T-cell (primary cell): ENCODE measurements at regions of chr5 and their contacts with region 1.

Region 1: GRCh38 chr5:157155297-157155696 is 10.8 kb downstream of the GARIN3 start:
- DNase-seq: no peak
- ATAC-seq: no peak
- H3K4me3 ChIP-seq: peak overlapping the region in 1 of 2 donors; percentile 4
- H3K4me3 Mint-ChIP-seq: peak overlapping the region; percentile 72 to 85 (median 81)
- H3K27ac ChIP-seq: peak overlapping the region; percentile 76
- H3K27ac Mint-ChIP-seq: peak overlapping the region; percentile 98 to 99
- H3K4me1 ChIP-seq: peaks cover 21 to 40% of the 10 kb centered on the region in 2 experiments
- H3K4me1 Mint-ChIP-seq: peaks cover 71 to 83% (median 77%) of the 10 kb centered on the region in 3 donors
- H3K27me3 ChIP-seq: no peaks in the 10 kb centered on the region
- H3K27me3 Mint-ChIP-seq: no peaks in the 10 kb centered on the region

Region 2: GRCh38 chr5:157142317-157143126 is 12.8 kb before region 1 on chr5 and contains the start of gene MED7:
- CTCF ChIA-PET with region 1: interaction called in 1 of 2 experiments, 13 read pairs
- POLR2A ChIA-PET with region 1: interaction called, 3 to 11 read pairs
- DNase-seq: peak; percentile 68 to 99 (median 93)
- ATAC-seq: peak; percentile 96 to 98 (median 96)
- H3K4me3 ChIP-seq: peak within 1 kb of the TSS; percentile 93 to 98
- H3K4me3 Mint-ChIP-seq: peak within 1 kb of the TSS; percentile 84 to 97 (median 95)
- H3K27ac ChIP-seq: peak within 1 kb of the TSS; percentile 92
- H3K27ac Mint-ChIP-seq: peak within 1 kb of the TSS; percentile 99
- H3K4me1 ChIP-seq: peaks cover 15 to 30% of the 10 kb centered on the region in 2 experiments
- H3K4me1 Mint-ChIP-seq: peaks cover 32 to 54% (median 50%) of the 10 kb centered on the region in 3 donors
- H3K27me3 ChIP-seq: no peaks in the 10 kb centered on the region
- H3K27me3 Mint-ChIP-seq: no peaks in the 10 kb centered on the region
- total RNA-seq, gene MED7: 5.7 to 14.9 (median 13.1) TPM